Right ventricle myocardium superior (tissue), 1 donor: ENCODE measurements at regions of chr5 and their contacts with region 1.

Region 1: GRCh38 chr5:43729846-43730478 is 127.0 kb downstream of the NNT start:
- DNase-seq: no peak
- ATAC-seq: peak; percentile 46

Region 2: DNA sequence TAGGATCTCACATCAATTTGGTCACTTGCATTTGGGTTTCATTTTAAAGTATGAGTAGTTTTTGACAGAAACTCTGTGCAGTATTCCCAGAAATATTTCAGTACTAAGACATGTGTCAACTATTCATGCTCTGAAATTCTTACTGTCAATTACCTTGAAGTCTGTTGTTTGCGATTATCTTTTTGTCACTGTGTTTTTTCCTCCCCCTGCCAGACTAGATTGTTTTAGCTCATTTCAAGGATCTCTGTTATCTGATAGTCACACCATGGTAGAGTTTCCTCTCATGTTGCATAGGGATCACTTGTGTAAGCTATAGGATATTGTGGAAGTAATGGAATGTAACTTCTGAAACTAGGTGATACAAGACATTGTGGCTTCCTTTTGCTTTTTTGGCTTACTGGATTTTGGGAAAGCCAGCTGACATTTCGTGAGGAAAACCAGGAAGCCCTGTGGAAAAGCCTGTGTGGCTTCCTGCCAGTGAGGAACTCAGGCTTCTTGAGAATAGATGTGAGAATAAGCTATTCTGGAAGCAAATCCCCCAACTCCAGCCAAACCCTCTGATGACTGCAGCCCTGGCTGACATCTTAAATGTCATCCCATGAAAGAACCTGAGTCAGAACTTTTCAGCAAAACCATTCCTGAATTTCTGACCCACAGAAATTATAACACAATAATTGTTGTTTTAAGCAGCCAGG is 537.1 kb after region 1 on chr5:
- intact Hi-C with region 1: no loop called
- DNase-seq: peak; percentile 51
- ATAC-seq: peak; percentile 49

Region 3: DNA sequence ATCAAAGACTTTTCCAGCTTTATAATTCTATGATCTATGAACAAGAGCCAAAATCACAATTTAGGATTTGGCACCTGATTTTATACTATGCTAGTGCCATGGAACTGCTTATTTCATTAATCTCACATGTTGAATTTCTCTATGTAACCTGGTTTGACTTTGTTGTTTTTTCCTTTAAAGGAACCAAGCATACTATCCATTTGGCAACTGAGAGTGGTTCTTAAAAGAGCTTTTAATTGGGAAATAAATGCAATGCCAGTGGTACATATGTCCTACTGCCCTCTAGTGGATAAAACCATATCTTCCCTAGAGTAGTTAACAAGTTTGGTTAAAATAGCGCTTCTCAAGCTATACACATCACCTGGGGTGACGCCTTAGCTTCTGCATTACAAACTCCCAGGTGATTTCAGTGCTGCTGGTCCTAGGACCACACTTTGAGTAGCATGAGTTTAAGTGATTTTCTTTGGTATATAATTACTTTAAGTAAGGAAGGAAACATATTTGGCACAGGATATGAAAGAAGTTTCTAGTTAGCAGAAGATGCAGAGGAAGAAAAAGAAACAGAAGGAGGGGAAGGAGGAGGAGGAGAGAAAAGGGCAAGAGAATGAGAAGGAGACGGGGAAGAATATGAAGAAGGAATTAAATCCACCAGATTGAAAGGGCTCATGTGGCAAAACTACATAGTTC is 602.5 kb after region 1 on chr5:
- intact Hi-C with region 1: loop called (anchors 5 kb)
- DNase-seq: no peak
- ATAC-seq: peak; percentile 74